GM12878 (cell line): ENCODE measurements at regions of chr18 and their contacts with region 1.

Region 1: GRCh38 chr18:2547477-2548087 is 23.7 kb downstream of the METTL4 start:
- DNase-seq: peak; percentile 5
- ATAC-seq: peak; percentile 74
- H3K4me3 ChIP-seq: no peak overlapping the region
- H3K27ac ChIP-seq: no peak overlapping the region
- H3K4me1 ChIP-seq: no peaks in the 10 kb centered on the region
- H3K27me3 ChIP-seq: no peaks in the 10 kb centered on the region
- CTCF ChIP-seq: peak; percentile 25 to 63 (median 49); a peak in 5 of 6 replicates
- EP300 ChIP-seq: no peak
- POLR2A ChIP-seq: no peak
- RAD21 ChIP-seq: peak; percentile 48

Region 2: GRCh38 chr18:1585879-1586488 is 961.6 kb before region 1 on chr18:
- CTCF ChIA-PET with region 1: interaction called, 18 read pairs
- POLR2A ChIA-PET with region 1: no interaction called
- RAD21 ChIA-PET with region 1: interaction called, 11 read pairs
- SMC1A ChIA-PET with region 1: interaction called, 10 read pairs
- in situ Hi-C with region 1: loop called (anchors 10 kb)
- intact Hi-C with region 1: loop called (anchors 5 kb)
- DNase-seq: peak; percentile 4
- ATAC-seq: peak; percentile 82
- H3K4me3 ChIP-seq: no peak overlapping the region
- H3K27ac ChIP-seq: no peak overlapping the region
- H3K4me1 ChIP-seq: no peaks in the 10 kb centered on the region
- H3K27me3 ChIP-seq: no peaks in the 10 kb centered on the region
- CTCF ChIP-seq: peak; percentile 35 to 52 (median 44); a peak in 5 of 6 replicates
- EP300 ChIP-seq: no peak
- POLR2A ChIP-seq: no peak
- RAD21 ChIP-seq: 0 out of 2 replicates have a peak, but pooled peaks have one; percentile 7

Region 3: DNA sequence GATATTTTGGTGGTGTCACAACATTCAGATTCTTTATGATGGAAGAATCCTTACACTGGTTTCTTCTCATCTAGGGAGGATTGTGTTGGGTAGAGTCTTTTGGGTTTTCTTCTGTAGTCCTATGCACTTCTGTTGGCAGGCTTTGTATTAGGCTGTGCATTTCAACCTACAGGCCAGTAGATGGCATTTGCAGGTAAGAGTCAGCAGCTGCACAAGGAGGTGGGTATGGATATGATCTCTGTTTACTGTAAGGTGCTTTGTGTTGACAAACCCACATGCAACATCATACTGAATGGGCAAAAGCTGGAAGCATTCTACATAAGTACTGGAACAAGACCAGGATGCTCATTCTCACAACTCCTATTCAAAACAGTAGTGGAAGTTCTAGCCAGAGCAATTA is 633.1 kb before region 1 on chr18:
- CTCF ChIA-PET with region 1: no interaction called
- POLR2A ChIA-PET with region 1: no interaction called
- RAD21 ChIA-PET with region 1: no interaction called
- SMC1A ChIA-PET with region 1: no interaction called
- in situ Hi-C with region 1: no loop called
- intact Hi-C with region 1: loop called (anchors 10 kb)
- DNase-seq: no peak
- ATAC-seq: peak; percentile 57
- H3K4me3 ChIP-seq: no peak overlapping the region
- H3K27ac ChIP-seq: no peak overlapping the region
- H3K4me1 ChIP-seq: no peaks in the 10 kb centered on the region
- H3K27me3 ChIP-seq: no peaks in the 10 kb centered on the region
- CTCF ChIP-seq: peak; percentile 24 to 36 (median 26); a peak in 4 of 6 replicates
- EP300 ChIP-seq: no peak
- POLR2A ChIP-seq: no peak
- RAD21 ChIP-seq: no peak

Region 4: GRCh38 chr18:2337552-2338141 is 209.9 kb before region 1 on chr18:
- CTCF ChIA-PET with region 1: interaction called, 74 read pairs
- POLR2A ChIA-PET with region 1: no interaction called
- RAD21 ChIA-PET with region 1: interaction called, 32 read pairs
- SMC1A ChIA-PET with region 1: interaction called, 48 read pairs
- in situ Hi-C with region 1: loop called (anchors 5 kb)
- intact Hi-C with region 1: loop called (anchors 1 kb)
- DNase-seq: no peak
- ATAC-seq: peak; percentile 95
- H3K4me3 ChIP-seq: no peak overlapping the region
- H3K27ac ChIP-seq: no peak overlapping the region
- H3K4me1 ChIP-seq: no peaks in the 10 kb centered on the region
- H3K27me3 ChIP-seq: no peaks in the 10 kb centered on the region
- CTCF ChIP-seq: peak; percentile 54 to 74 (median 68)
- EP300 ChIP-seq: no peak
- POLR2A ChIP-seq: no peak
- RAD21 ChIP-seq: peak; percentile 50; the same call in 1 of the 2 replicates

Region 5: DNA sequence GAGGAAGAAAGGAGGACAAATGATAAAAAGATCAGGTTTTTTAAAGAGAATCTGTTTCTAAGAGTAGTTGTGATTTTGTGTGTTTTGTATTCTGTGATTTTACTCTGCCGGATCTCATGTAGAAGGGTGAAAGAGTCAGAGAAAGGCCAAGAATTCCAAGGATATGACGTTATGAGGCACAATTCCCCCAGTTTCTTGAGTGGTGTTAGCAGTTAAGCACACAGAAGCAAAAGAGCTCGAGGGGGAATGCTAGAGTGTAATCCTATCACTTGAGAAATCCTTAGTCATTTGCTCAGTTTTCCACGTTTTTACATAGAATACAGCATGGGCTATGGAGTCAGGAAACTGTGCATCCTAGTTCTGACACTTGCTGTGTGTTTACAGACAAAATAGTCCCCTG is 11.1 kb before region 1 on chr18:
- CTCF ChIA-PET with region 1: interaction called, 14 read pairs
- POLR2A ChIA-PET with region 1: no interaction called
- RAD21 ChIA-PET with region 1: interaction called, 3 read pairs
- SMC1A ChIA-PET with region 1: interaction called, 5 read pairs
- in situ Hi-C with region 1: no loop called
- intact Hi-C with region 1: no loop called
- DNase-seq: no peak
- ATAC-seq: no peak
- H3K4me3 ChIP-seq: no peak overlapping the region
- H3K27ac ChIP-seq: no peak overlapping the region
- H3K4me1 ChIP-seq: no peaks in the 10 kb centered on the region
- H3K27me3 ChIP-seq: no peaks in the 10 kb centered on the region
- CTCF ChIP-seq: no peak
- EP300 ChIP-seq: no peak
- POLR2A ChIP-seq: no peak
- RAD21 ChIP-seq: no peak

Region 6: GRCh38 chr18:2571200-2572143 is 23.9 kb after region 1 on chr18 and contains the starts of genes METTL4 and NDC80:
- CTCF ChIA-PET with region 1: interaction called, 16 read pairs
- POLR2A ChIA-PET with region 1: no interaction called
- RAD21 ChIA-PET with region 1: interaction called, 4 read pairs
- SMC1A ChIA-PET with region 1: no interaction called
- in situ Hi-C with region 1: no loop called
- intact Hi-C with region 1: no loop called
- DNase-seq: peak; percentile 71
- ATAC-seq: peak; percentile 82
- H3K4me3 ChIP-seq: peak within 1 kb of the TSS; percentile 82
- H3K27ac ChIP-seq: peak within 1 kb of the TSS; percentile 100
- H3K4me1 ChIP-seq: peaks cover 5% of the 10 kb centered on the region
- H3K27me3 ChIP-seq: no peaks in the 10 kb centered on the region
- CTCF ChIP-seq: 0 out of 6 replicates have a peak, but pooled peaks of 1 of the 3 experiments have one; percentile 12
- EP300 ChIP-seq: no peak
- POLR2A ChIP-seq: peak; percentile 87
- RAD21 ChIP-seq: no peak
- polyA plus RNA-seq, gene METTL4: 7.6 to 13.3 TPM
- polyA plus RNA-seq, gene NDC80: 54.4 to 55.0 TPM